AG04449 (cell line): ENCODE measurements at regions of chr3 and their contacts with region 1.

Region 1: GRCh38 chr3:132722164-132723024 is at the start of gene NPHP3:
- DNase-seq: peak; percentile 78
- H3K4me3 ChIP-seq: peak within 1 kb of the TSS; percentile 79
- CTCF ChIP-seq: no peak

Region 2: GRCh38 chr3:132522353-132522752 is 200.0 kb before region 1 on chr3:
- CTCF ChIA-PET with region 1: no interaction called
- POLR2A ChIA-PET with region 1: no interaction called
- DNase-seq: no peak
- H3K4me3 ChIP-seq: no peak overlapping the region
- CTCF ChIP-seq: no peak

Region 3: GRCh38 chr3:132670795-132671194 is 51.6 kb before region 1 on chr3:
- CTCF ChIA-PET with region 1: no interaction called
- POLR2A ChIA-PET with region 1: no interaction called
- DNase-seq: no peak
- H3K4me3 ChIP-seq: no peak overlapping the region
- CTCF ChIP-seq: no peak

Region 4: DNA sequence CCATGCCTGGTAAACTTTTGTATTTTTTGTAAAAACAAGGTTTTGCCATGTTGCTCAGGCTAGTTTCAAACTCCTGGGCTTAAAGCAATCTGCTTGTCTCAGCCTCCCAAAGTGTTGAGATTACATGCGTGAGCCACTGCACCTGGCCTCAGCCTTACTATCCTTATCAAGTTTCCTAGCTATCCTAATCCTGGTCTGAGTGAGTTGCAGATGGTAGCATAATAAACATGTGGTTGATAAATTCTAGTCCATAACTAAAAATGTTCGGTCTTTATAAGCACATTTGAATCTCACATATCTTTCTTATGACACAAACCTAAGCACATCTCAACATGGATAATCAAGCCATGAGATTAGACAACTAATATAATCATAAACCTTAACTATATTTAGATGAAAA is 18.7 kb before region 1 on chr3:
- CTCF ChIA-PET with region 1: no interaction called
- POLR2A ChIA-PET with region 1: no interaction called
- DNase-seq: no peak
- H3K4me3 ChIP-seq: no peak overlapping the region
- CTCF ChIP-seq: no peak

Region 5: GRCh38 chr3:132738314-132738713 is 15.9 kb after region 1 on chr3:
- CTCF ChIA-PET with region 1: interaction called, 22 read pairs
- POLR2A ChIA-PET with region 1: no interaction called
- DNase-seq: no peak
- H3K4me3 ChIP-seq: no peak overlapping the region
- CTCF ChIP-seq: no peak

Region 6: DNA sequence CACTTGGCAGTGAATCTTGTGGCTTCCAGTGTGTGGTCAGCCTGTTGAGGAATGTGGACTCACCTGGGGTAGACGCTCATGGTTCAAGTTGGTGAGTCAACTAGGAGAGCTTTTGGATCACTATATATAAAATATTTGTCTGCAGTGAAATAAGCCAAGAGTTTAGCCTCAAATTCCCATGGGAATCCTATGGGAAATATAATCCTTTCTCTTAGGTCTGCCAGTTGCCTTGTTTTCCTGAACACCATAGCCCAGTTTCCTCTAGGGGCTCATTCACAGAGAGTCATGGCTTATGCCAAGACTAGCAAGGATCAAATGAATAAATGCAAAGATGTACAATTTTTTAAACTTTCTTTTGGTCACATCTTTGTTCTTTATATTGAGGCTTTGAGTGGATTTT is 99.9 kb after region 1 on chr3:
- CTCF ChIA-PET with region 1: no interaction called
- POLR2A ChIA-PET with region 1: no interaction called
- DNase-seq: no peak
- H3K4me3 ChIP-seq: no peak overlapping the region
- CTCF ChIP-seq: no peak

Region 7: GRCh38 chr3:133384331-133385027 is 662.1 kb after region 1 on chr3:
- CTCF ChIA-PET with region 1: interaction called, 160 read pairs
- POLR2A ChIA-PET with region 1: no interaction called
- DNase-seq: no peak
- H3K4me3 ChIP-seq: no peak overlapping the region
- CTCF ChIP-seq: peak; percentile 89

Region 8: GRCh38 chr3:133413161-133414020 is 691.0 kb after region 1 on chr3:
- CTCF ChIA-PET with region 1: interaction called, 13 read pairs
- POLR2A ChIA-PET with region 1: no interaction called
- DNase-seq: no peak
- H3K4me3 ChIP-seq: peak overlapping the region; percentile 19; the same call in 1 of the 2 replicates
- CTCF ChIP-seq: no peak